ENCODE measurements at regions of chr1 and their contacts with region 1.

Region 1: GRCh38 chr1:69743146-69743545 is 175.4 kb downstream of the LRRC7 start:
- DNase-seq: no peak
- H3K4me3 ChIP-seq: no peak overlapping the region
- H3K4me3 Mint-ChIP-seq: no peak overlapping the region
- H3K27ac Mint-ChIP-seq: no peak overlapping the region
- H3K4me1 ChIP-seq: no peaks in the 10 kb centered on the region
- H3K4me1 Mint-ChIP-seq: peaks cover 8% of the 10 kb centered on the region
- H3K27me3 ChIP-seq: no peaks in the 10 kb centered on the region
- H3K27me3 Mint-ChIP-seq: no peaks in the 10 kb centered on the region
- CTCF ChIP-seq: no peak

Region 2: DNA sequence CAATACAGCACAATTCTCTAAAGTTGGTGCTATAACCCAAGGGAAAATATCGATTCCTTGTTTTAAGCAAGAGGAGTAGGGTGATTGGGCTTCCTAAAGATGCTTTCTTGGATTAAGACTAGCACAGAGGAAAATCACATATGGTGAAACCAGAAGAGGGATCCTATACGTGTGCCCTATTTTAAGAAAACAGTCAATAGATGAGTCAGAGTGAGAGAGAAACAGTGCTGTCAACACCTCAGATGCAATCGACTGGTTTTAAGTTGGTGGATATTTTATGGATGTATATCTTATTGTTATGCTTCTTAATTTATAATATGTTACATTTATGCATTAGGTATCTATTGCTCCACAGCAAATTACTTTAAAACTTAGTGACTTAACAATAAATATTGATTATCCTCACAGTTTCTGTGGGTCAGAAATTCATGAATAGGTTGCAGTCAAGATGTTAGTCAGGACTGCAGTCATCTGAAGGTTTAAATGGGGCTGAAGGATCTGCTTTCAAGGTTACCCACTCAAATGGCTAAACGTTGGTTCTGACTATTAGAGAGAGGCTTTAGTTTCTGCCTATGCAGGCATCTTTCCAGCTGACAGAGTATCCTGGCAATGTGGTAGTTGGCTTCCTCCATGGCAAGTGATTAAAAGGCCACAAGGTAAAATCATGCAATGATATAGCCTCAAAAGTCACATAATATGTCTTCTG is 1184.7 kb before region 1 on chr1:
- CTCF ChIA-PET with region 1: no interaction called
- POLR2A ChIA-PET with region 1: no interaction called
- intact Hi-C with region 1: loop called (anchors 5 kb)
- DNase-seq: no peak
- H3K4me3 ChIP-seq: no peak overlapping the region
- H3K4me3 Mint-ChIP-seq: no peak overlapping the region
- H3K27ac Mint-ChIP-seq: no peak overlapping the region
- H3K4me1 ChIP-seq: no peaks in the 10 kb centered on the region
- H3K4me1 Mint-ChIP-seq: no peaks in the 10 kb centered on the region
- H3K27me3 ChIP-seq: no peaks in the 10 kb centered on the region
- H3K27me3 Mint-ChIP-seq: peaks cover 4% of the 10 kb centered on the region
- CTCF ChIP-seq: no peak

Measured in Caco-2 (cell line).